Psoas muscle (tissue), 8 donors: ENCODE measurements at regions of chr9 and their contacts with region 1.

Region 1: DNA sequence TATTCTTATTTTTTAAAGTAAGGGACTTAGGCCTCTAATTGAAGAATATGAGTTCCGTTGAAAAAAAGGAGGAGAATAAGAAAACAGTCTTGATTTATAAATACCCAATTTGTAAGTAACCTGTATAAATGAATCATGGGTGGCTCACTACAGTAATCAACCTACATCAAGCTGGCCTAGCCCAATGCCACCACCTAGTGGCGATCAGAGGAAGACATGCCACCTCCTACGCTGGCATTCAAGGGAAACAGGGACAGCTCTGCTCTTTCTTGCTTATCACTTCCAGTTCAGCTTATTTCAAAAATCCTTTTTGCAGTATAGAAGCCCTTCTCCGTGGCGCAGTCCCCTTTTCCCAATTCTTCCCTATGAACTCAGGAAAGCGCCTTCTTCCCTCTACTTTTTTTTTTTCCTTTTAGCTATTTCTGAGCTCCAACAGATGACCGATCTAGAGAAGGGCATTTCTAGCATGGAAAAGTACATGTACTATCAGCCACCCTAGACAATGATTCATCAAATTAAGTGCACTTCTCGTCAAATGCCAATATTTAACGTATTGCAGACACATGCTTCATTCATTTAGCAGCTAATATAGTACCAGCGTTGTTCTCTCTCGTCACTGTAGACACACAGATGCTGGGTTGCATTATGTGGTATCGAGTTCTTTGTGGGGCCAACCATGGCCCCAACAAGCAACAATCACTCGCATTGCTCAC is 28.3 kb downstream of the PTPN3 start:
- DNase-seq: peak; percentile 61 to 85
- ATAC-seq: peak; percentile 88 to 92 (median 90)
- H3K4me3 ChIP-seq: no peak overlapping the region
- H3K27ac ChIP-seq: peak overlapping the region; percentile 87
- H3K4me1 ChIP-seq: peaks cover 55% of the 10 kb centered on the region
- H3K27me3 ChIP-seq: no peaks in the 10 kb centered on the region
- CTCF ChIP-seq: peak; percentile 94

Region 2: GRCh38 chr9:109422641-109423040 is 47.2 kb before region 1 on chr9:
- intact Hi-C with region 1: loop called in 1 of 2 experiments (anchors 5 kb)
- DNase-seq: no peak
- ATAC-seq: no peak
- H3K4me3 ChIP-seq: no peak overlapping the region
- H3K27ac ChIP-seq: peak overlapping the region; percentile 92
- H3K4me1 ChIP-seq: peaks cover 67% of the 10 kb centered on the region
- H3K27me3 ChIP-seq: no peaks in the 10 kb centered on the region
- CTCF ChIP-seq: no peak

Region 3: GRCh38 chr9:109440797-109441287 is 29.0 kb before region 1 on chr9:
- intact Hi-C with region 1: loop called in 1 of 2 experiments (anchors 2 kb)
- DNase-seq: no peak
- ATAC-seq: peak; percentile 73 to 84 (median 79)
- H3K4me3 ChIP-seq: no peak overlapping the region
- H3K27ac ChIP-seq: peak overlapping the region; percentile 18
- H3K4me1 ChIP-seq: peaks cover 22% of the 10 kb centered on the region
- H3K27me3 ChIP-seq: no peaks in the 10 kb centered on the region
- CTCF ChIP-seq: peak; percentile 78

Region 4: GRCh38 chr9:109507421-109507838 is 37.6 kb after region 1 on chr9:
- intact Hi-C with region 1: loop called in 1 of 2 experiments (anchors 5 kb)
- DNase-seq: peak; percentile 71 to 89
- ATAC-seq: peak; percentile 94 to 97 (median 97)
- H3K4me3 ChIP-seq: no peak overlapping the region
- H3K27ac ChIP-seq: peak overlapping the region; percentile 79
- H3K4me1 ChIP-seq: peaks cover 11% of the 10 kb centered on the region
- H3K27me3 ChIP-seq: no peaks in the 10 kb centered on the region
- CTCF ChIP-seq: no peak